ENCODE measurements at regions of chr1 and their contacts with region 1.

Region 1: GRCh38 chr1:159015440-159015909 is 5.8 kb downstream of the IFI16 start:
- DNase-seq: peak; percentile 85
- H3K4me3 Mint-ChIP-seq: peak overlapping the region; percentile 96
- H3K27ac Mint-ChIP-seq: peak overlapping the region; percentile 100
- H3K4me1 Mint-ChIP-seq: peaks cover 56% of the 10 kb centered on the region
- H3K27me3 Mint-ChIP-seq: no peaks in the 10 kb centered on the region

Region 2: GRCh38 chr1:158554352-158554751 is 461.1 kb before region 1 on chr1 and contains the start of gene OR6Y1:
- CTCF ChIA-PET with region 1: no interaction called
- POLR2A ChIA-PET with region 1: no interaction called
- intact Hi-C with region 1: no loop called
- DNase-seq: no peak
- H3K4me3 Mint-ChIP-seq: no peak within 1 kb of the TSS
- H3K27ac Mint-ChIP-seq: no peak within 1 kb of the TSS
- H3K4me1 Mint-ChIP-seq: no peaks in the 10 kb centered on the region
- H3K27me3 Mint-ChIP-seq: peaks cover 7% of the 10 kb centered on the region
- total RNA-seq, gene OR6Y1: not detected

Region 3: GRCh38 chr1:158989424-158989823 is 26.1 kb before region 1 on chr1:
- CTCF ChIA-PET with region 1: no interaction called
- POLR2A ChIA-PET with region 1: no interaction called
- intact Hi-C with region 1: no loop called
- DNase-seq: no peak
- H3K4me3 Mint-ChIP-seq: no peak overlapping the region
- H3K27ac Mint-ChIP-seq: no peak overlapping the region
- H3K4me1 Mint-ChIP-seq: peaks cover 2% of the 10 kb centered on the region
- H3K27me3 Mint-ChIP-seq: no peaks in the 10 kb centered on the region

Region 4: DNA sequence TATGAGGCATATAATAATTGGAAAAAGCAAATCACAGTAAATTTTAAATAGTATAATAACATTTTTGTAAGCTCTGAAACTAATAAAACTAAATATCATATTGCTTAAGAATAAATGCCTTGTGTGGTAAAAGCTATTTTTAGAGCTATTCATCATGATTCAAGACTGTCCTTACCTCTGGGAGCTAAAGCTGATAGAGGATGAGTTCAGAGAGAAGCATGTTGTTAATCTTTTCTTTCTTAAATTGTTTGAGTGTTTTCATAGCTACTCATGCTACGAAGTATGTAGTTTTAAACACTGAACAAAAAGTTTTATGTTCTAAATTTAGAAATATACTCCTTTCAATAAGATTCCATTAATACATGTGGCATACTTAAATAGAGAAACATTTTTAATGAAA is 24.7 kb after region 1 on chr1:
- CTCF ChIA-PET with region 1: no interaction called
- POLR2A ChIA-PET with region 1: interaction called, 6 read pairs
- intact Hi-C with region 1: loop called (anchors 2 kb)
- DNase-seq: no peak
- H3K4me3 Mint-ChIP-seq: no peak overlapping the region
- H3K27ac Mint-ChIP-seq: no peak overlapping the region
- H3K4me1 Mint-ChIP-seq: peaks cover 61% of the 10 kb centered on the region
- H3K27me3 Mint-ChIP-seq: no peaks in the 10 kb centered on the region

Region 5: GRCh38 chr1:159056069-159056698 is 40.7 kb after region 1 on chr1:
- CTCF ChIA-PET with region 1: interaction called, 3 read pairs
- POLR2A ChIA-PET with region 1: interaction called, 4 read pairs
- intact Hi-C with region 1: loop called (anchors 2 kb)
- DNase-seq: no peak
- H3K4me3 Mint-ChIP-seq: no peak overlapping the region
- H3K27ac Mint-ChIP-seq: peak overlapping the region; percentile 70
- H3K4me1 Mint-ChIP-seq: peaks cover 59% of the 10 kb centered on the region
- H3K27me3 Mint-ChIP-seq: no peaks in the 10 kb centered on the region